ENCODE measurements at regions of chr15 and their contacts with region 1.

Region 1: GRCh38 chr15:41774062-41774881 is at the start of gene MAPKBP1:
- DNase-seq: peak; percentile 99
- ATAC-seq: peak; percentile 93
- H3K4me3 Mint-ChIP-seq: peak within 1 kb of the TSS; percentile 86
- H3K27ac Mint-ChIP-seq: peak within 1 kb of the TSS; percentile 100
- H3K4me1 Mint-ChIP-seq: peaks cover 38% of the 10 kb centered on the region
- H3K27me3 Mint-ChIP-seq: no peaks in the 10 kb centered on the region
- CTCF ChIP-seq: 0 out of 2 replicates have a peak, but pooled peaks have one; percentile 37
- total RNA-seq, gene MAPKBP1: 11.0 to 14.5 TPM (median 12.9 TPM) in 3 replicates

Region 2: GRCh38 chr15:41557673-41558399 is 216.4 kb before region 1 on chr15:
- CTCF ChIA-PET with region 1: interaction called, 16 read pairs
- POLR2A ChIA-PET with region 1: interaction called, 8 read pairs
- DNase-seq: peak; percentile 76
- ATAC-seq: peak; percentile 75
- H3K4me3 Mint-ChIP-seq: peak overlapping the region; percentile 80
- H3K27ac Mint-ChIP-seq: peak overlapping the region; percentile 81
- H3K4me1 Mint-ChIP-seq: peaks cover 46% of the 10 kb centered on the region
- H3K27me3 Mint-ChIP-seq: no peaks in the 10 kb centered on the region; the same call in 1 of the 2 replicates
- CTCF ChIP-seq: peak; percentile 80

Region 3: GRCh38 chr15:41660235-41661077 is 113.8 kb before region 1 on chr15 and contains the start of gene MGA:
- CTCF ChIA-PET with region 1: interaction called, 15 read pairs
- POLR2A ChIA-PET with region 1: interaction called, 3 read pairs
- DNase-seq: peak; percentile 91
- ATAC-seq: peak; percentile 80
- H3K4me3 Mint-ChIP-seq: peak within 1 kb of the TSS; percentile 83
- H3K27ac Mint-ChIP-seq: peak within 1 kb of the TSS; percentile 36
- H3K4me1 Mint-ChIP-seq: peaks cover 23% of the 10 kb centered on the region
- H3K27me3 Mint-ChIP-seq: peaks cover 45% of the 10 kb centered on the region
- CTCF ChIP-seq: no peak
- total RNA-seq, gene MGA: 35.9 to 36.9 TPM (median 36.4 TPM) in 3 replicates

Region 4: GRCh38 chr15:41811432-41812195 is 37.3 kb after region 1 on chr15:
- CTCF ChIA-PET with region 1: interaction called, 158 read pairs
- POLR2A ChIA-PET with region 1: interaction called, 13 read pairs
- DNase-seq: peak; percentile 89
- ATAC-seq: peak; percentile 88
- H3K4me3 Mint-ChIP-seq: no peak overlapping the region
- H3K27ac Mint-ChIP-seq: no peak overlapping the region
- H3K4me1 Mint-ChIP-seq: peaks cover 6% of the 10 kb centered on the region
- H3K27me3 Mint-ChIP-seq: no peaks in the 10 kb centered on the region
- CTCF ChIP-seq: peak; percentile 37; the same call in 1 of the 2 replicates

Region 5: DNA sequence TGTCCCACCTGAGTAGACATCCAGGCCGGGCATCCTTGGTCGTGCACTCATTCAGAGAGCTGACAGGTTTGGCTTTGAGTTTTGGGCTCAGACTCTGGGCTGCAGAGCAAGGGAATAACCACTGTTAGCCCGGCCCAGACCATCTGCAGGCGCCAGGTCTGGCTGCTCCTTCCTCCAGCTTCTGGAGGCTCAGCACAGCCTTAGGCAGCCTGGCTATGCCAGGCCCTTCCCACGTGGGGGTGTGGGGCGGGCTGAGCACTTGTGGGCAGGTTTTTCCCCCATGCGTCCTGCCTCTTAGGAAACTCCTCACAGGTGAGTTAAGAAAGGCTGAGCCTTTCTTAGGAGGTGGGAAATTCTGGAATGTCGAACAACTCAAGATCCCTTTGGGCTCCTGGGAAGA is 75.6 kb after region 1 on chr15:
- CTCF ChIA-PET with region 1: interaction called, 20 read pairs
- POLR2A ChIA-PET with region 1: no interaction called
- DNase-seq: no peak
- ATAC-seq: no peak
- H3K4me3 Mint-ChIP-seq: no peak overlapping the region
- H3K27ac Mint-ChIP-seq: no peak overlapping the region
- H3K4me1 Mint-ChIP-seq: no peaks in the 10 kb centered on the region
- H3K27me3 Mint-ChIP-seq: no peaks in the 10 kb centered on the region
- CTCF ChIP-seq: no peak

Region 6: GRCh38 chr15:41904541-41905005 is 130.3 kb after region 1 on chr15:
- CTCF ChIA-PET with region 1: interaction called, 83 read pairs
- POLR2A ChIA-PET with region 1: no interaction called
- DNase-seq: peak; percentile 81
- ATAC-seq: peak; percentile 91
- H3K4me3 Mint-ChIP-seq: no peak overlapping the region
- H3K27ac Mint-ChIP-seq: peak overlapping the region; percentile 86
- H3K4me1 Mint-ChIP-seq: peaks cover 7% of the 10 kb centered on the region
- H3K27me3 Mint-ChIP-seq: no peaks in the 10 kb centered on the region
- CTCF ChIP-seq: peak; percentile 63